ENCODE measurements at regions of chr6 and their contacts with region 1.

Region 1: GRCh38 chr6:75296811-75297779 is 12.5 kb upstream of the TMEM30A start:
- DNase-seq: peak; percentile 71
- ATAC-seq: peak; percentile 53; the same call in 1 of the 2 replicates
- H3K4me3 ChIP-seq: no peak overlapping the region
- H3K27ac ChIP-seq: no peak overlapping the region
- H3K4me1 ChIP-seq: peaks cover 2% of the 10 kb centered on the region; the same call in 1 of the 2 replicates
- H3K27me3 ChIP-seq: no peaks in the 10 kb centered on the region
- CTCF ChIP-seq: peak; percentile 80
- POLR2A ChIP-seq: no peak
- RAD21 ChIP-seq: peak; percentile 85

Region 2: DNA sequence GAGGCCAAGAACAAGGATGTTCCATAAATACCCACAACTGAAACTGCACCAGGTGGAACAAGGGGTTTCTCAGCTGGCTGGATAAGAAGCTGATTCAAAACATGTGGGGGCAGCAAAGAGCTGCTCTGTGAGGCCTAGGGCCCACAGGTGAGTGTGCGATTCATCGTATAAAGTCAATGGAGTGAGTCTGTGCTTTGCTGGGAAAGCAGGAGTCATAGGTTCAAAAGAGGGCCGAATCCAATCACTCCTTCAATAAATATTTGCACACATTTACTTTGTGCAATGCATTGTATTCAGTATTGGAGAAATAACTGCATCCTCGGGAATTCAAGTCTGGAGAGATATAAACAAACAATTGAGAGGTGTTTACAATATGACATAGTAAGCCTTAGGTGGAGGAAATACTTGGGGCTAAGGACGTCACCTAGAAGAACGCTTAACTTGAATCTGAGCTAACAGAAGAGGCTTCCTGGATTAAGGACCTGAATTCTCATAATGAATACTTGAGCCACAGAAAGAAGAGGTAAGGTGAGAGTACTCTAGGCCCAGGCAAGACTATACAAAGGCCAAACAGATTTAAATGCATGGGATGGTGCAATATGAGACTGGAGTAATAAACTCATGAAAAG is 71.2 kb after region 1 on chr6:
- CTCF ChIA-PET with region 1: no interaction called
- POLR2A ChIA-PET with region 1: no interaction called
- dilution Hi-C with region 1: no loop called
- in situ Hi-C with region 1: no loop called
- intact Hi-C with region 1: no loop called
- DNase-seq: peak; percentile 22
- ATAC-seq: no peak
- H3K4me3 ChIP-seq: no peak overlapping the region
- H3K27ac ChIP-seq: no peak overlapping the region
- H3K4me1 ChIP-seq: no peaks in the 10 kb centered on the region; the same call in 1 of the 2 replicates
- H3K27me3 ChIP-seq: peaks cover 1% of the 10 kb centered on the region; the same call in 1 of the 2 replicates
- CTCF ChIP-seq: peak; percentile 43
- POLR2A ChIP-seq: no peak
- RAD21 ChIP-seq: peak; percentile 57

Region 3: GRCh38 chr6:75504465-75505228 is 207.6 kb after region 1 on chr6:
- CTCF ChIA-PET with region 1: interaction called, 3 read pairs
- POLR2A ChIA-PET with region 1: no interaction called
- dilution Hi-C with region 1: no loop called
- in situ Hi-C with region 1: no loop called
- intact Hi-C with region 1: loop called (anchors 1 kb)
- DNase-seq: no peak
- ATAC-seq: 0 out of 2 replicates have a peak, but pooled peaks have one; percentile 27
- H3K4me3 ChIP-seq: no peak overlapping the region
- H3K27ac ChIP-seq: no peak overlapping the region
- H3K4me1 ChIP-seq: peaks cover 1% of the 10 kb centered on the region; the same call in 1 of the 2 replicates
- H3K27me3 ChIP-seq: peaks cover 2% of the 10 kb centered on the region; the same call in 1 of the 2 replicates
- CTCF ChIP-seq: peak; percentile 38
- POLR2A ChIP-seq: no peak
- RAD21 ChIP-seq: peak; percentile 40

Measured in IMR-90 (cell line).